A549 (cell line): ENCODE measurements at regions of chr17 and their contacts with region 1.

Region 1: DNA sequence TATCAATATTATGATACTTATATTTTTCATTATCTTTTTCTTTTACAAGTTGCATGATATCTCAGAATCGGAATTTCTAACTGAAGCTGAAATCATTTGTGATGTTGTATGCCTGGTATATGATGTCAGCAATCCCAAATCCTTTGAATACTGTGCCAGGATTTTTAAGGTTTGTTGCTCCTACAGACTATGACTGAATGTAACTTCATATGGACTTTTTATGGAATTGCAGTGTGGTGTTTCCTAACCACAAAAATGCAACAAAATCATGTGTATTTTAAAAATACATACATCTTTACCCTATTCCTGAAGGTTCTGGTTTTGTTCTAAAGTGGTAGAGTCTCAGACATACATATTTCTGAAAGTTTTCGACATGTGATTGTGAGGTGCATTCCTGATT is 58.8 kb upstream of the RHBDL3 start:
- DNase-seq: no peak
- ATAC-seq: no peak
- H3K4me3 ChIP-seq: no peak overlapping the region
- H3K27ac ChIP-seq: no peak overlapping the region
- H3K4me1 ChIP-seq: peaks cover 11% of the 10 kb centered on the region
- CTCF ChIP-seq: no peak
- EP300 ChIP-seq: no peak
- POLR2A ChIP-seq: no peak
- RAD21 ChIP-seq: no peak

Region 2: DNA sequence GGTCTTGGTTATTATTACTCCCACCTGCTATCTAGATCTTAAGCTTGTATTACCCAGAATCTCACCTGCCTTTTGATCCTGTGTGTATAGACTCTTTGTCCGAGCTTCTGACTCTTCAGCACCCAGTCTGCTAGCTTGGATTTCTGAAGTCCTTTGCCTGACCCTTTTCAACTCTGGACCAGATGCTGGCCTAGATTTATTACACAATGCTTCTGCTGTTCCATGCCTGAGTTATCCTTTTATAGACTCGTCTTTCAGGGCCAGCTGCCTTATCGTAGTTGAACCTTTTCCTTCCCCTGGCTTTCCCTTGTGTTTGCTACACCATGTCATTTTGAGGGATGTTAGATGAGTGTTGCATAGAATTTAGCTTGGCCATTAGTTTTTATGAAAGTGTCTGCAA is 32.0 kb before region 1 on chr17:
- CTCF ChIA-PET with region 1: no interaction called
- POLR2A ChIA-PET with region 1: no interaction called
- DNase-seq: no peak
- ATAC-seq: no peak
- H3K4me3 ChIP-seq: no peak overlapping the region
- H3K27ac ChIP-seq: no peak overlapping the region
- H3K4me1 ChIP-seq: 0 out of 3 replicates have a peak, but pooled peaks cover 6% of the 10 kb centered on the region
- CTCF ChIP-seq: no peak
- EP300 ChIP-seq: no peak
- POLR2A ChIP-seq: no peak
- RAD21 ChIP-seq: no peak

Region 3: DNA sequence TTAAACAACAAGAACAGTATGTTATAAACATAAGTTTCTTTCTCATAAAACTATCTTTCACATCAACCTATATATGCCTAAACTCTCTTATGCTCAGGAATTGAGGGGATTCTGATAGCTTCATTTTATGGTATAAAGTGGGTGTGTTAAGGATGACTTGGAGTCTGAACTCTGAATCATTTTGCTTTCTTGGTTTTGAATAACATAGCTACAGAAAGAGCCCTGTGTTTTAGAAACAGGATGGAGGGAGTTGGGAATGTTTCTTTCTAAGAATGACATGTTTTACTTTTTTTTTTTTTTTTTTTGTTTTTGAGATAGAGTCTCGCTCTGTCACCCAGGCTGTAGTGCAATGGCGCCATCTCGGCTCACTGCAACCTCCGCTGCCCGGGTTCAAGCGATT is 14.5 kb before region 1 on chr17:
- CTCF ChIA-PET with region 1: interaction called, 13 read pairs
- POLR2A ChIA-PET with region 1: no interaction called
- DNase-seq: no peak
- ATAC-seq: peak in 1 of 2 experiments; percentile 48; a peak in 3 of 6 replicates
- H3K4me3 ChIP-seq: no peak overlapping the region
- H3K27ac ChIP-seq: no peak overlapping the region
- H3K4me1 ChIP-seq: peaks cover 21% of the 10 kb centered on the region
- CTCF ChIP-seq: no peak
- EP300 ChIP-seq: no peak
- POLR2A ChIP-seq: no peak
- RAD21 ChIP-seq: no peak

Region 4: GRCh38 chr17:32396343-32396742 is 189.5 kb after region 1 on chr17:
- CTCF ChIA-PET with region 1: no interaction called
- POLR2A ChIA-PET with region 1: no interaction called
- DNase-seq: no peak
- ATAC-seq: peak; percentile 39 to 60; a peak in 3 of 6 replicates
- H3K4me3 ChIP-seq: no peak overlapping the region
- H3K27ac ChIP-seq: no peak overlapping the region
- H3K4me1 ChIP-seq: 0 out of 3 replicates have a peak, but pooled peaks cover 4% of the 10 kb centered on the region
- CTCF ChIP-seq: no peak
- EP300 ChIP-seq: no peak
- POLR2A ChIP-seq: no peak
- RAD21 ChIP-seq: no peak